ENCODE measurements at regions of chr7 and their contacts with region 1.

Region 1: GRCh38 chr7:76179686-76180085 is 22.0 kb upstream of the SRRM3 start:
- DNase-seq: no peak
- H3K4me3 Mint-ChIP-seq: no peak overlapping the region
- H3K27ac Mint-ChIP-seq: no peak overlapping the region
- H3K4me1 Mint-ChIP-seq: peaks cover 8% of the 10 kb centered on the region
- H3K27me3 Mint-ChIP-seq: peaks cover 9% of the 10 kb centered on the region

Region 2: GRCh38 chr7:75716992-75717626 is 462.6 kb before region 1 on chr7:
- CTCF ChIA-PET with region 1: no interaction called
- DNase-seq: no peak
- H3K4me3 Mint-ChIP-seq: no peak overlapping the region
- H3K27ac Mint-ChIP-seq: no peak overlapping the region
- H3K4me1 Mint-ChIP-seq: no peaks in the 10 kb centered on the region
- H3K27me3 Mint-ChIP-seq: peaks cover 5% of the 10 kb centered on the region

Region 3: GRCh38 chr7:76166404-76167255 is 13.1 kb before region 1 on chr7:
- CTCF ChIA-PET with region 1: interaction called, 20 read pairs
- DNase-seq: peak; percentile 94
- H3K4me3 Mint-ChIP-seq: peak overlapping the region; percentile 80
- H3K27ac Mint-ChIP-seq: peak overlapping the region; percentile 84
- H3K4me1 Mint-ChIP-seq: peaks cover 11% of the 10 kb centered on the region
- H3K27me3 Mint-ChIP-seq: no peaks in the 10 kb centered on the region

Region 4: DNA sequence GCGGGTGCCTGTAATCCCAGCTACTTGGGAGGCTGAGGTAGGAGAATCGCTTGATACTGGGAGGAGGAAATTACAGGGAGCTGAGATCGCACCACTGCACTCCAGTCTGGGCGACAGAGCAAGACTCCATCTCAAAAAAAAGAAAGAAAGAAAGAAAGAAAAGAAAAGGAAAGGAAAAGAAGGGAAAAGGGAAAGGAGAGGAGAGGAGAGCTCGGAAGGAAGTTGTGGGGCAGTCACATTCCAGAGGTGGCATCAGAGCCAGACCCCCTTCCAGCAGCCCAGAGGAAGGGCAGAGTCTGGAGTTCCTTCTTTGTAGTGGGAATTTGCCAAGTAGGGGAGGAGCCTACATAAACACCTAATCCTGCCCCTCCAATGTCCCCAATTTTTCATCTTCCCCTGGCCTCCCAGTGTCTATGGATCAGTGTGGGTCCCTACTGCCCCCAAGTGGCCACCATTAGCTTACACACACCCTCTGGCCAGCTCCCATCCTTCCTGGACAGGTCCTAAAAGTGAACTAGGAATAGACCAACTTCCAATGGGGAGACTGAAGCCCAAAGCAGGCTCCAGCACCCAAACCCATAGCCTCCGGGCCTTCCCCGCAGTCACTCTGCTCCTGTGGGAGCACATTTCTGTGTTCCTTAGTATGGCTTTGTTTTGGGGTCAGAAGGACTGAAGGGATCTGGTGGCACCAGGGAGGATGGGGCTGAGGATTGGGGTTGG is 83.2 kb after region 1 on chr7:
- CTCF ChIA-PET with region 1: interaction called, 43 read pairs
- DNase-seq: peak; percentile 59
- H3K4me3 Mint-ChIP-seq: no peak overlapping the region
- H3K27ac Mint-ChIP-seq: no peak overlapping the region
- H3K4me1 Mint-ChIP-seq: peaks cover 10% of the 10 kb centered on the region
- H3K27me3 Mint-ChIP-seq: peaks cover 70% of the 10 kb centered on the region

Region 5: DNA sequence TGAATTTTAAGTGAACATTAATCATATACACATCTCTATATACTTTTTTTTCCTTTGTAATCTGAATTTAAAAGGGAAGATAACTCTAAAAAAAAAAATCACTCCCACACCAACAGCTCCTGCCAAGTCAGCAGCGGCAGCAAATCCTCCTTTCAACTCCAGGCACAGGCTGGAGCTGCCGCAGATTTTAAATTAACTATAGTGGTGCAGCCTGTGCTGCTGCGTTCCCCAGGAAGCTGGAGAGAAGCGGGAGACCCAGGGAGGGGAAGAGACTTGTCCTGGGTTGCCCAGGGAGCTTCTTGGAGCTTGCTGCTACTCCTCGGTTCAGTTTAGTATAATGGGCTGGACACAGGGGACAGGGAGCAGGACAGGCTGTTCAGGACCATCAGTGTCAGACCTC is 90.2 kb after region 1 on chr7:
- CTCF ChIA-PET with region 1: interaction called, 12 read pairs
- DNase-seq: no peak
- H3K4me3 Mint-ChIP-seq: no peak overlapping the region
- H3K27ac Mint-ChIP-seq: no peak overlapping the region
- H3K4me1 Mint-ChIP-seq: peaks cover 22% of the 10 kb centered on the region
- H3K27me3 Mint-ChIP-seq: peaks cover 47% of the 10 kb centered on the region

Region 6: GRCh38 chr7:76291343-76292212 is 111.9 kb after region 1 on chr7:
- CTCF ChIA-PET with region 1: interaction called, 25 read pairs
- DNase-seq: peak; percentile 90
- H3K4me3 Mint-ChIP-seq: no peak overlapping the region
- H3K27ac Mint-ChIP-seq: no peak overlapping the region
- H3K4me1 Mint-ChIP-seq: peaks cover 10% of the 10 kb centered on the region
- H3K27me3 Mint-ChIP-seq: peaks cover 29% of the 10 kb centered on the region